GM12878 (cell line): ENCODE measurements at regions of chr10 and their contacts with region 1.

Region 1: GRCh38 chr10:109784236-109784635 is 139.1 kb downstream of the XPNPEP1 start:
- DNase-seq: no peak
- ATAC-seq: no peak
- H3K4me3 ChIP-seq: no peak overlapping the region
- H3K27ac ChIP-seq: no peak overlapping the region
- H3K4me1 ChIP-seq: no peaks in the 10 kb centered on the region
- H3K27me3 ChIP-seq: no peaks in the 10 kb centered on the region
- CTCF ChIP-seq: no peak
- EP300 ChIP-seq: no peak
- POLR2A ChIP-seq: no peak
- RAD21 ChIP-seq: no peak

Region 2: DNA sequence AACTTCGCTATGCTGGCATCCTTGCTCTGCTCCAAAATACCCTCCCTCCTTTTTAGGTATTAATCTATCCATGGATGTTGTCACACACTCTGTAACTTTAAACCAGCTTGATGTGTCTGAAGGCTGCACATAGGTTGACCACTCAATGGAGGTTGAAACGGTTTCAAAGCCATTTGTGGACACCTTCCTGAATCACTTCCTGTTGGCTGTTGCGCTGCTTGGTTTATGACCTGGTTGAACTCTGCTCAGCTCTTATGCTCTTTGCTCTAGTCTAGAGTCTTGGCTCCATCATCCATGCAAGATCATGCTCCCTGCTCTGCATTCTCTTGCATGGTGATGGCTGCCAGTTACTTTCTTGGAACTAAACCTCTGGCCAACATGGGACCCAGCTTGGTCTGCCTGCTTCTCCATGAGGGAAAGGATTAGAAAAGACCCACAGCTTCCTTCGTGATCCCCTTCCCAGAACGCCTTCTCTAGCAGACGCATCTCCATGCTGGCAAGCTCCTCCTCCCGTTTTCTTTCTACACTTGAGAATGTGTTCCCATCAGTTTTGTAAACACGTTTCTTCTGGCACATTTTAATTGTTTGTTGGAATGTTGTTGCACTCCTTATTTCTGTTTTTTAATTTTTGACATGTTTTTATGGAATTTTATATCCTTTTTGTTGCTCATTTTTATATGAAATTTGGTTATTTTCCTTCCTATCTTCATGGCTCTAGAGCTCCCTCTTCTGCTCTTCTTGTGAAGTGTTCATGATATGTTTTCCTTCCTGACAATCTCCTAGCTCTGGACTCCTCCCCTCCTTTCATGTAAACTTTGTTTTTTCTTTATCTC is 10.7 kb before region 1 on chr10:
- CTCF ChIA-PET with region 1: interaction called, 13 read pairs
- POLR2A ChIA-PET with region 1: no interaction called
- RAD21 ChIA-PET with region 1: no interaction called
- SMC1A ChIA-PET with region 1: interaction called, 3 read pairs
- in situ Hi-C with region 1: no loop called
- intact Hi-C with region 1: no loop called
- DNase-seq: no peak
- ATAC-seq: peak; percentile 73
- H3K4me3 ChIP-seq: no peak overlapping the region
- H3K27ac ChIP-seq: no peak overlapping the region
- H3K4me1 ChIP-seq: no peaks in the 10 kb centered on the region
- H3K27me3 ChIP-seq: no peaks in the 10 kb centered on the region
- CTCF ChIP-seq: peak; percentile 44 to 53 (median 44)
- EP300 ChIP-seq: no peak
- POLR2A ChIP-seq: no peak
- RAD21 ChIP-seq: peak; percentile 45

Region 3: GRCh38 chr10:109996225-109996624 is 212.0 kb after region 1 on chr10:
- CTCF ChIA-PET with region 1: no interaction called
- POLR2A ChIA-PET with region 1: no interaction called
- RAD21 ChIA-PET with region 1: no interaction called
- SMC1A ChIA-PET with region 1: no interaction called
- in situ Hi-C with region 1: no loop called
- intact Hi-C with region 1: no loop called
- DNase-seq: no peak
- ATAC-seq: peak; percentile 87
- H3K4me3 ChIP-seq: no peak overlapping the region
- H3K27ac ChIP-seq: peak overlapping the region; percentile 32; the same call in 1 of the 2 replicates
- H3K4me1 ChIP-seq: peaks cover 14% of the 10 kb centered on the region
- H3K27me3 ChIP-seq: no peaks in the 10 kb centered on the region
- CTCF ChIP-seq: no peak
- EP300 ChIP-seq: no peak
- POLR2A ChIP-seq: no peak
- RAD21 ChIP-seq: no peak